Endothelial cell of umbilical vein (primary cell): ENCODE measurements at regions of chr5 and their contacts with region 1.

Region 1: DNA sequence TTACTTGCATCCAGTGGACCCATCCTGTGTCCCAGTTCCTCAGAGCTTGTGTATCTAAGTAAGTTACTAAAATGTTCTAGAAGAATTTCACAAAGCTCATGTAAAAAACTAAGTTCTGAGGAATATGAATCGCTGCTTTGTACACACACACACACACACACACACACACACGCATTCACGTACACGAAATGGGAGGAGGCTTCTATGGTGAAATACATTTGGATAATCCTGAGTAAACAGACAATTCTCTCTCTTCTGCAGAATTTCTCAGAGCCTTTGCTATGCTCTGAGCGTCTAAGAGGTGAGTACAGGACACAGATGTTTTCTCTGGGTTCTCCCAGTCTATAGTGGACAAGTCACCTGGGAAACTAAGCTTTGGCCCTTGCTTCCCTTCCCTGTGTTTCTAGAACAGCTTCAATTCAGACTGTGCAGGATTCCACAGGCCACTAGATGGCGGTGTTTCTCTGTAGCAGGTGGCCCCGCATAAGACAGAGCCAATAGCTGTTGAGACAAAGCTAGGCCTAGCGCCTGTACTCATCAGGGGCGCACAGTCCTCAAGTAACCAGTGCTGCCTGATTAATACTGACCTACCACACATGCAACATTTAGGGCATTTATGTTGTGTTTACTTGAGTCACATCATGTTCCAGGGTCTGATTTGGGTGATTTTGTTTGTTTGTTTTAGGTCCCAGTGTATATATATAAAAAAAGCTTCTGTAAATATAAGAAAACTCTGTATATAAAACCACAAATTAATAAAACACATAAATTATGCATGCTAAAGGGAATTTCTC is 114.8 kb downstream of the LIFR start:
- DNase-seq: peak; percentile 89
- H3K4me3 ChIP-seq: no peak overlapping the region
- H3K27ac ChIP-seq: no peak overlapping the region
- H3K4me1 ChIP-seq: no peaks in the 10 kb centered on the region
- H3K27me3 ChIP-seq: no peaks in the 10 kb centered on the region
- CTCF ChIP-seq: peak; percentile 89 to 96
- POLR2A ChIP-seq: no peak

Region 2: GRCh38 chr5:37996918-37997317 is 444.7 kb before region 1 on chr5:
- CTCF ChIA-PET with region 1: no interaction called
- POLR2A ChIA-PET with region 1: no interaction called
- dilution Hi-C with region 1: no loop called
- intact Hi-C with region 1: no loop called
- DNase-seq: no peak
- H3K4me3 ChIP-seq: no peak overlapping the region
- H3K27ac ChIP-seq: no peak overlapping the region
- H3K4me1 ChIP-seq: no peaks in the 10 kb centered on the region
- H3K27me3 ChIP-seq: peaks cover 0 to 3% of the 10 kb centered on the region in 2 experiments
- CTCF ChIP-seq: no peak
- POLR2A ChIP-seq: no peak

Region 3: GRCh38 chr5:38420691-38421390 is 20.8 kb before region 1 on chr5:
- CTCF ChIA-PET with region 1: interaction called, 179 read pairs
- POLR2A ChIA-PET with region 1: no interaction called
- dilution Hi-C with region 1: no loop called
- intact Hi-C with region 1: loop called (anchors 2 kb)
- DNase-seq: peak; percentile 73
- H3K4me3 ChIP-seq: peak overlapping the region in 1 of 3 experiments; percentile 32
- H3K27ac ChIP-seq: peak overlapping the region; percentile 39
- H3K4me1 ChIP-seq: peaks cover 11% of the 10 kb centered on the region
- H3K27me3 ChIP-seq: no peaks in the 10 kb centered on the region
- CTCF ChIP-seq: peak; percentile 74 to 81
- POLR2A ChIP-seq: no peak

Region 4: GRCh38 chr5:38483788-38484398 is 42.2 kb after region 1 on chr5:
- CTCF ChIA-PET with region 1: interaction called, 20 read pairs
- POLR2A ChIA-PET with region 1: no interaction called
- dilution Hi-C with region 1: no loop called
- intact Hi-C with region 1: no loop called
- DNase-seq: no peak
- H3K4me3 ChIP-seq: no peak overlapping the region
- H3K27ac ChIP-seq: no peak overlapping the region
- H3K4me1 ChIP-seq: no peaks in the 10 kb centered on the region
- H3K27me3 ChIP-seq: no peaks in the 10 kb centered on the region
- CTCF ChIP-seq: peak in 1 of 2 donors; percentile 4
- POLR2A ChIP-seq: no peak

Region 5: GRCh38 chr5:38540314-38540713 is 98.7 kb after region 1 on chr5:
- CTCF ChIA-PET with region 1: interaction called, 167 read pairs
- POLR2A ChIA-PET with region 1: no interaction called
- dilution Hi-C with region 1: no loop called
- intact Hi-C with region 1: no loop called
- DNase-seq: peak; percentile 12
- H3K4me3 ChIP-seq: no peak overlapping the region
- H3K27ac ChIP-seq: no peak overlapping the region
- H3K4me1 ChIP-seq: no peaks in the 10 kb centered on the region
- H3K27me3 ChIP-seq: no peaks in the 10 kb centered on the region
- CTCF ChIP-seq: no peak
- POLR2A ChIP-seq: no peak

Region 6: GRCh38 chr5:38650946-38651345 is 209.3 kb after region 1 on chr5:
- CTCF ChIA-PET with region 1: interaction called, 120 read pairs
- POLR2A ChIA-PET with region 1: interaction called, 5 read pairs
- dilution Hi-C with region 1: no loop called
- intact Hi-C with region 1: no loop called
- DNase-seq: peak; percentile 92
- H3K4me3 ChIP-seq: peak overlapping the region in 1 of 3 experiments; percentile 28
- H3K27ac ChIP-seq: peak overlapping the region; percentile 44
- H3K4me1 ChIP-seq: peaks cover 12% of the 10 kb centered on the region
- H3K27me3 ChIP-seq: peaks cover 0 to 2% of the 10 kb centered on the region in 2 experiments
- CTCF ChIP-seq: no peak
- POLR2A ChIP-seq: no peak

Region 7: DNA sequence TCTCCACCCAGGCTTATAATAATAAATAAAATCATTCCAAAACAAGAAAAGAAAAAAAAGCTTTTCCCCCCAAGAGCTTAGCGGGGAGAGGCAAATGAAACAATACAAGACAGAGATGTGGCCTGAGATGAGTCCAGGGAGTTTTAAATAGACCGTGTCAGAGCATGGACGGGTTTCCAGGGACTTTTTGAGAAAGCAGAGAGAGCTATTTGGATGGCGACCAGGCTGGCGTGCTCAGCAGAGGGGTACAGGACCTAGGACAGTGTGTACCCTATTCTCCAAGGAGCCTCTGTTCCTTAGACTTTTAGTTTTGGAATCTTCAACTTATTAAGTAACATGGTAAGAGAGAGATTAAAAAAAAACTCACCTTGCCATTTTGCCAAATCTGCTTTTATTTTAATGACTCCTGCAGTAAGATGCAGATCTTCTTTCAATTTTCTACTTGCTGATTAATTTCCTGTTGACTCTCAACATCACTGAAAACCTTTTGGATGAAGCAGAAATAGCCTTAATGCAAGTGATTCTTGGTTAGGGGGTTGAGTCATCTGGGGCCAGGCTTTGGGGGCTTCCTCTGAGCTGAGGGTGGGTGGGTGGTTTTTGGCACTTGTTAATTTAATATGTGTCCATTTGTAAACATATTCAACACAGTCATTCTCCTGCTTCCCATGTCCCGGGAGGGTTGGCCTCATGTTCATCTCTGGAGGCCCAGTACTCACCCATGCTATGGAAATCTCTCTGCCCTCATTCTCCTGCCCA is 354.5 kb after region 1 on chr5:
- CTCF ChIA-PET with region 1: interaction called, 21 read pairs
- POLR2A ChIA-PET with region 1: no interaction called
- dilution Hi-C with region 1: loop called (anchors 25 kb)
- intact Hi-C with region 1: no loop called
- DNase-seq: peak; percentile 79
- H3K4me3 ChIP-seq: peak overlapping the region in 1 of 3 experiments; percentile 22
- H3K27ac ChIP-seq: peak overlapping the region; percentile 37
- H3K4me1 ChIP-seq: peaks cover 15% of the 10 kb centered on the region
- H3K27me3 ChIP-seq: no peaks in the 10 kb centered on the region
- CTCF ChIP-seq: no peak
- POLR2A ChIP-seq: no peak

Region 8: GRCh38 chr5:39024005-39024404 is 582.4 kb after region 1 on chr5:
- CTCF ChIA-PET with region 1: no interaction called
- POLR2A ChIA-PET with region 1: no interaction called
- dilution Hi-C with region 1: no loop called
- intact Hi-C with region 1: no loop called
- DNase-seq: no peak
- H3K4me3 ChIP-seq: no peak overlapping the region
- H3K27ac ChIP-seq: no peak overlapping the region
- H3K4me1 ChIP-seq: no peaks in the 10 kb centered on the region
- H3K27me3 ChIP-seq: no peaks in the 10 kb centered on the region
- CTCF ChIP-seq: no peak
- POLR2A ChIP-seq: no peak